ENCODE measurements at regions of chr17 and their contacts with region 1.

Region 1: DNA sequence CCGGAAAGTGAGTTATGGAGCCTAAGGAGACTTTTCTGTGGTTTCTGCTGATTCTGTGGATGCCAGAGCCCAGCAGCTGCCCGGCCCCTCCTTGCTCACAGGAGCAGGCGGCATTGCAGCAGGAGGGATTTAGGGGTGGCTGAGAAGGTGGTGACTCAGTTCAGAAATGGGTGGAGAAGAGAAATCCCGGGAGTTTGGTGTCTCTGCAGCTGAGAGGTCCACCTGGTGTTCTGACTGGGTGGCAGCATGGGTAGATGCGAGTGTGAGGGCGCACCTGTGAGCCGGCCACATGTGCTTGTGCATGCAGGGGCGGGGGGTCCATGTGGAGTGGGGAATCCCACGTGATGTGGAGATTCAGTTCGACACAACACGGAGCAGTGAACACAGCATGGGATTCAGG is 16.1 kb upstream of the SPPL2C start:
- DNase-seq: no peak

Region 2: GRCh38 chr17:45775576-45776011 is 53.0 kb before region 1 on chr17:
- intact Hi-C with region 1: loop called in 1 of 2 experiments (anchors 10 kb)
- DNase-seq: no peak

Region 3: GRCh38 chr17:45841883-45842525 is 13.4 kb after region 1 on chr17:
- intact Hi-C with region 1: loop called in 1 of 2 experiments (anchors 1 kb)
- DNase-seq: no peak

Region 4: DNA sequence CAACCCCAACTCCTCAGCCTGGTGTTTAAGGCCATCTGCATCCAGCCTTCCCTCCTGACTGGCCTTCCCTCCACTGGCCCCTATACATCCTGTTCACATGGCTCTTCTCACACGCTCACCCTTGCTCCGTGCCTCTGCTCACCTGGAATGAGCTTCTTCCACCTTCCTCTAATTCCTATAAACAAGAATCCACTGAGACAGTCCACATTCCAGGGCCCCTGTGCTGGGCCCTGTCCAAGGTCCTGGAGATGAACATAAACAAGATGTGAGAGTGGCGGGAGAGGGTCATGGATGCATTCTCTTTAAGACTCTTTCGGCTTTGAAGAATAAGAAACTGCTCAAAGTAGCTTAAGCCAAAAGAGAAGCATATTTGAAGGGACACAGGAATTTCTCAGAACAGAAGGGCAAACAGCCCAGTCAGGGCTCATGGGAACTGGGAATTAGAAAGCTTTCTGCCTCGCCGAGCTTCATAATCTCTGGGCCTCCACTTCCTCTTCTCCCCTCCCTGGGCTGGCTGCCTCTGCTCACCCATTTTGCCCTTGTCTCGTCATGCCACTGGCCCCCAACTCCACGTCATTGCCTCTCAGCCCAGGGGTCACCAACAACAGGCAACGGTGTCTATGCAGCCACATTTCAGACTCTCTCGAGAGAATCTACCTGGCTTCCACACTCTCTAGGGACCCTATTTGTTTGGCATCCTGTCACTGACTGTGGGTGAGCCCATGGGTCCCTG is 29.5 kb after region 1 on chr17:
- intact Hi-C with region 1: no loop called
- DNase-seq: peak; percentile 66

Measured in posterior vena cava (tissue), 2 donors.